Stomach (tissue), 19 donors: ENCODE measurements at regions of chr2 and their contacts with region 1.

Region 1: GRCh38 chr2:32772638-32773447 is 145.0 kb downstream of the TTC27 start:
- DNase-seq: peak in 1 of 2 donors; percentile 74
- H3K4me3 ChIP-seq: no peak overlapping the region
- H3K27ac ChIP-seq: no peak overlapping the region
- H3K4me1 ChIP-seq: peaks cover 0 to 16% (median 3%) of the 10 kb centered on the region in 4 donors
- H3K27me3 ChIP-seq: no peaks in the 10 kb centered on the region
- CTCF ChIP-seq: peak in 5 of 7 experiments; percentile 46 to 66 (median 63)
- EP300 ChIP-seq: no peak
- POLR2A ChIP-seq: no peak

Region 2: DNA sequence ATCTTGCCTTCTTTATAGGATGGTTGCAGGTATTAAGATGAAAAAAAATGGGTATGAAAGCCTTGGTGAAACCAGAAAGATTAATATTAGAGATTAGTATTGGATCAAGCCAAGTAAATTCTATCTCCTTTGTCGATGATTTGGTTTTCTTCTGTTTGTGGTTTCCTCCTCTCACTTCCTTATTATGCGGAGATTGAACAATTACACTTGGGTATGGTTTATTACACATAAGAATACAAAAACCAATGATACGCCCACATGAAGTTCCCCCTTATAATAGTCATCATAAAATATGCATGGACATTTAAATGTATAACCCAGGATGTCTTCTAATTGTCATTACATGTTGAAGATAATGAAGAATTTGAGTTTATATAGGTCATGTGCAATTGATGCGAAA is 178.8 kb after region 1 on chr2:
- intact Hi-C with region 1: loop called (anchors 10 kb)
- DNase-seq: no peak
- H3K4me3 ChIP-seq: no peak overlapping the region
- H3K27ac ChIP-seq: no peak overlapping the region
- H3K4me1 ChIP-seq: peaks cover 0 to 25% (median 14%) of the 10 kb centered on the region in 4 donors
- H3K27me3 ChIP-seq: peaks cover 0 to 19% (median 0%) of the 10 kb centered on the region in 3 donors
- CTCF ChIP-seq: no peak
- EP300 ChIP-seq: no peak
- POLR2A ChIP-seq: no peak